Thyroid gland (tissue), 4 donors: ENCODE measurements at regions of chr9 and their contacts with region 1.

Region 1: DNA sequence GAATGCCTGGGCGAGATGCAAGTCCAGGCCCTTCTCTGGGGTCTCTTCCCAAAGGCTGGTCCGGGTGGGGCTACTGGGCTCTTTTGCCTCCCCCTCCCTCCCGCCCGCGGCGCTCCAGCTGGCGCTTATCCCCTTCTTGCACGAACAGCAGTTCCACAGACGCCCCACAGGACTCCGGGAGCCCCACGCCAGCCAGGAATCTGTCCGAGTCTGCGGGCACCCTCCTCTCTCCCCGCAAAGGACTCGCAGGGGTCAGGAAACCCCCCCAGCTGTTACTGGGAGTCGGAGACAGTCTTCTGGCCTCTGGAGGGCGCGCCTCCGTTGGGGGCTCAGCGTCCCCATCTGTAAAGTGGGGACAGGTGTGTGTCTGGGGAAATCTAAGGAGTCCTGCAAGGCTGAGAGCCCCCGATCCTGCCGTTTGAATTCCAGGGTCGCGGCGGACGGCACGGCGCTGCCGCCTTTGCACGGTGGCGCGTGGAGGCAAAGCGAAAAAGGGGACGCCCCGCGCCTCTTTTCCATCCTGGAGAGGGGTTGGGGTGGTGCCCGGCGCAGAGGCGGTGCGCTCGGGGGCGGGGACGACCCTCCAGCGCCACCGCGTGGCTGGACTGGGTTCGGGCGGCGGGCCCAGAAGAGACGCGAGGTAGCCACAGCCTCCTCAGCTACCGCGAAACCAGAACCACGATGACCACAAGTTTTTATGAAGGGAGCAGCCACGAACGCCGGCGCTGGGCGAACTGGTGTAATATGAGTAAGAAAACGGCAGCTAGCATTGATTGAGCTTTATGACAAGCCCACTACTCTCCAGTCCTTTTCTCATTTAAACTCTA is 2.9 kb upstream of the CCIN start:
- DNase-seq: peak; percentile 74 to 76
- H3K4me3 ChIP-seq: peak overlapping the region in 2 of 3 donors; percentile 11 to 35
- H3K27ac ChIP-seq: peak overlapping the region in 2 of 3 donors; percentile 24 to 57
- H3K4me1 ChIP-seq: peaks cover 8 to 26% of the 10 kb centered on the region in 2 donors
- H3K27me3 ChIP-seq: no peaks in the 10 kb centered on the region
- CTCF ChIP-seq: peak; percentile 82 to 95 (median 92)
- POLR2A ChIP-seq: no peak

Region 2: DNA sequence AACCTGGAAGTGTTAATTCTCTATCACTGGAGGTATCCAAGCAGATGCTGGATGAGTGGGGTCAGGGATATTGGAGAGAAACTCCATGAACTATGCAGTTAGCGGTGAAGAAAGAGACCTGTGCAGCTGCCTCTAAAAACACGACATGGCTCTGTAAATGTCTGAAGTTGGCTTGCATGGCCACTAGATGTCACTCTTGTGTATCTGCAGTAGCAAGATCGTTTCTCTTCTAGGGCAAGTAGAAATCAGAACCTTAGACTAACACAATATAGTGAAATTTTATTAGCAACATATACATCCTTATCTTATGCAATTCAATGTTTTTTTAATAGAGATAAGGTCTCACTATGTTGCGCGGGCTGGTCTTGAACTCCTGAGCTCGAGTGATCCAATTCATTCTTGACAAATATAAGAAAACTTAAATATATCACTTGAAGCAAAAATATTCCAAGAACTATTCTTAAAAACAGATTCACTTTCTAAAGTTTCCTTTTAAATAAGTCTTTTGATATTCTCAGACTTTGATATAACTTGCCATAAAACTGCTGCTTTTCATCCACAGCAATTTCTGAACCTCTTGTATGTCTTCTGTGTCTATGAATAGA is 211.3 kb before region 1 on chr9:
- intact Hi-C with region 1: loop called (anchors 10 kb)
- DNase-seq: peak; percentile 65 to 66
- H3K4me3 ChIP-seq: no peak overlapping the region
- H3K27ac ChIP-seq: no peak overlapping the region
- H3K4me1 ChIP-seq: no peaks in the 10 kb centered on the region
- H3K27me3 ChIP-seq: no peaks in the 10 kb centered on the region
- CTCF ChIP-seq: peak; percentile 80 to 91 (median 84)
- POLR2A ChIP-seq: no peak

Region 3: DNA sequence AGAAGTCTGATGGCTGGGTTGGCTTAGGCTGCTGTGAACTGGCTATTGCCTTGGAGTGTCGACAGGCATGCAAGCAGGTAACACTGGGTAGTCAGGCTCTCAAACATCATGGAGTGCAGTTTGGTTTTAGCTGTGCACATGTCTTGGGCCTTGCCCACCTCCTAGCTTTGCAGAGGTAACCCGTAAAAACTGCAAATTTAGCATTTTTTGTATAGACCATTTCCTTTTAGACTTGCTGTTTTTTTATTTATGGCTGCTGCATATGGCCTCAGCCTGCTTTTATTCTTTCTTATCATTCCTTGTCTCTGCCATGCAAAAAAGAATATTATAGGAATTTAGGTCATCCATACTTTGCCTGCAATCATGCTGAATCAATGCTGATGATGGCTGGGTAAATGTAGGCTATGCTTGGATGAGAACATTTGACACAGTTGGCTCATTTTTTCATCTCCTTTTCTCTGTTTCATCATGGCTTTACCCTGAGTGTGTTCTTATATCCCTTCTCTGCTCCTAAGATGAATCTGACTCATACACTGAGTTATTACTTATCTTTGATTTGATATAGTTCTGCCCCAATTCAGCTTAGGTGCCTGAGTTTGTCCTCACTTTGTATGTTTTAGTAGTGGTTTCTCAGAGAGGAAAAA is 102.4 kb before region 1 on chr9:
- intact Hi-C with region 1: no loop called
- DNase-seq: no peak
- H3K4me3 ChIP-seq: no peak overlapping the region
- H3K27ac ChIP-seq: no peak overlapping the region
- H3K4me1 ChIP-seq: no peaks in the 10 kb centered on the region
- H3K27me3 ChIP-seq: no peaks in the 10 kb centered on the region
- CTCF ChIP-seq: no peak
- POLR2A ChIP-seq: no peak

Region 4: DNA sequence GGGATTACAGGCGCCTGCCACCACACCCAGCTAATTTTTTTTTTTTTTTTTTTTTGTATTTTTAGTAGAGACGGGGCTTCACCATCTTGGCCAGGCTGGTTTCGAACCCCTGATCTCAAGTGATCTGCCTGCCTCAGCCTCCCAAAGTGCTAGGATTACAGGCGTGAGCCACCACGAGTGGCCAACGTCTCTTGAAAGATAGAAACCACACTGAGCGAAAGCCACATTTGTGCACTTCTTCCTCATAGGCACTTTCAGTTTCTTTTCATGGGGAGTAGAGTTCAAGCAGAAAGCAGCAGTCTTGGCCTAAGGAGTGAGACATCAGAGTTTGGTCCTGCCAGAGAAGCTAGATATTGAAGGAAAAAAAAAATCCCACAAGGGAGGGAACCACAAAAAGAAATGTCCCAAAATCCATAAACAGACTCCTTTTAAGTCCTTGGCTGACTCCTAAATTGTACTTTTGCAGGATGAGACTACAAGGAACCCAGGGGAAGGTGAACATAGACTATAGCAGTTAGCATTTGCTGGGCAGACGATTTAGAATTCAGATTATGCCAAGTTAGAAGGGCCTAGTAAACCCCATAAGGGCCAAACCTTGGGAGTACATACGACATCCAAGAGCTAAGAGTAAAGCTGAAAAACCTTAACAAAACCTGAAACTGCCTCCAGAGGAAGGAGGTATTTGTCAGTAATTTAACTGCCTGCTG is 73.7 kb before region 1 on chr9:
- intact Hi-C with region 1: no loop called
- DNase-seq: no peak
- H3K4me3 ChIP-seq: no peak overlapping the region
- H3K27ac ChIP-seq: no peak overlapping the region
- H3K4me1 ChIP-seq: peaks cover 0 to 6% of the 10 kb centered on the region in 2 donors
- H3K27me3 ChIP-seq: no peaks in the 10 kb centered on the region
- CTCF ChIP-seq: no peak
- POLR2A ChIP-seq: no peak

Region 5: GRCh38 chr9:36102742-36103495 is 63.4 kb before region 1 on chr9:
- intact Hi-C with region 1: loop called (anchors 2 kb)
- DNase-seq: peak; percentile 86 to 91
- H3K4me3 ChIP-seq: no peak overlapping the region
- H3K27ac ChIP-seq: peak overlapping the region in 1 of 3 donors; percentile 4
- H3K4me1 ChIP-seq: no peaks in the 10 kb centered on the region
- H3K27me3 ChIP-seq: no peaks in the 10 kb centered on the region
- CTCF ChIP-seq: peak; percentile 39 to 89 (median 80)
- POLR2A ChIP-seq: no peak